ENCODE measurements at regions of chr17 and their contacts with region 1.

Region 1: GRCh38 chr17:68972119-68972704 is 17.0 kb upstream of the ABCA8 start:
- DNase-seq: no peak
- H3K4me3 ChIP-seq: no peak overlapping the region
- H3K27ac ChIP-seq: no peak overlapping the region
- H3K4me1 ChIP-seq: no peaks in the 10 kb centered on the region
- H3K27me3 ChIP-seq: no peaks in the 10 kb centered on the region
- CTCF ChIP-seq: peak in 3 of 4 experiments; percentile 43 to 62 (median 59)
- POLR2A ChIP-seq: no peak

Region 2: DNA sequence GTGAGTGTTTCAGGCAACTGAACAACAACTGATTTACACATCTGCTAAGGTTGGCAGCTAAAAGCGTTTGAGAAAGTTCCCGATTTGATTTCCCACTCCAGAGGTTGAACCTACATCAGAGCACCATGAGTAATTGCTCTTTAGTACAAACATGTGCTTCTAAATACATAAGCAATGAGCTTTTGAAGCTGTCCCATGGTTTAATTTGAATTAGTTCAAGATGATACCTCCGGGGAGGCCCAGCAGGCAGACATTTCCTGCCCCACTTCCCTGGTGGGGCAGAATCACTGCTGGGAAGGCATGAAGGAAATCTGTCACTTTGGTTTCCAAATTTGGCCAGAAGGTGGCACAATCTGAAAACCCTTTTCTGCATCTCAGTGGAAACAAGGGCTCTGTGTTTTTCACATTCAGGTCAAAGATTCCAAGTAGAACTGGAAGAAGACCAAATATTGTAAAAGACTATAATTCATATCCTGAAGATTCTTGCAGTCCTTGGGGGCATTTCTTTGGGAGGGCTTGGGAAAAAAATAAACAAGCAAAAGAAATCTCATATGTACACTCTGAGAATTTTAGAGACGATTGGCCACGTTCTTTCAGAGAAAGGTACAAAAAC is 194.9 kb before region 1 on chr17:
- intact Hi-C with region 1: loop called (anchors 5 kb)
- DNase-seq: peak; percentile 32
- H3K4me3 ChIP-seq: no peak overlapping the region
- H3K27ac ChIP-seq: no peak overlapping the region
- H3K4me1 ChIP-seq: no peaks in the 10 kb centered on the region
- H3K27me3 ChIP-seq: no peaks in the 10 kb centered on the region
- CTCF ChIP-seq: peak in 3 of 4 experiments; percentile 68 to 72 (median 70)
- POLR2A ChIP-seq: no peak